Heart right ventricle (tissue), 16 donors: ENCODE measurements at regions of chr1 and their contacts with region 1.

Region 1: DNA sequence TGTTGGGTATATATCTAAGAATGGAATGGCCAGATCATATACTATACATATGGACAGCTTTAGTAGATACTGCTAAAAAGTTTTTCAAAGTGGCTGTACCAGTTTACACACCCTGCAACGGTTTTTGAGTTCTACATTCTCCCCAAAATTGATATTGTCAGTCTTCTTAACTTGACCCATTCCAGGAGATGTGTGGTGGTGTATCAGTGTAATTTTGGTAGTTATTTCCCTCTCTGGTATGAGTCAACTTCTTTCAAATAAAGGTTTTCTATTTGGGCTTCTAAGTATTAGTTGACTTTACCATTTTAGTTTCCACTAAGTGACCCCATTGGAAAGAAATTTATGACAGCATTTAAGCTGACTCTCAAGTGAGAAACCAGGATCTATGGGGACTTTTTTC is 29.2 kb downstream of the INKA2 start:
- DNase-seq: no peak
- ATAC-seq: no peak
- H3K4me3 ChIP-seq: no peak overlapping the region
- H3K27ac ChIP-seq: no peak overlapping the region
- H3K4me1 ChIP-seq: peaks cover 0 to 10% (median 0%) of the 10 kb centered on the region in 9 donors
- H3K27me3 ChIP-seq: no peaks in the 10 kb centered on the region
- CTCF ChIP-seq: no peak

Region 2: DNA sequence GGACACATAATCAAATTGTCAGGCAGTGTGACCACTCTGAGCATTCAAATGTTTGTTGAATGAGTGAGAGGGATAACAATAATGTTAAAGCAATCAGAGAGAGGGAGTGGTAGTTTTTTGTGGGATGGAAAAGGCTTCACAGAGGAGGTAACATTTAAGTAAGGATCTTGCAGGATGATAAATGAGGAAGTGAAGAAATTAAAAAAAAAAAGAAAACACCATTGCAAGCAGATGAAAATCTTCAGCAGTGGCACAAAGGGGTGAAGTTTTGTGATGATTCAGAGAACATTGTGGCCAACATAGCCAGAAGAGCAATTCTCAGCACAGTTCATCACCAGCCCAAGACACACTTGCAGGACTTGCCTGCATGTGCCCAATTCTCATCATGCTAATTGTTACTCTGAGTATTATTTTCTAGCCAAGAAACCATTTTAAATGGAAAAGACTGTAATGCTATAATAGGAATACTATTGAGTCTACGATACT is 317.5 kb before region 1 on chr1:
- intact Hi-C with region 1: no loop called
- DNase-seq: no peak
- ATAC-seq: peak in 1 of 8 donors; percentile 37
- H3K4me3 ChIP-seq: no peak overlapping the region
- H3K27ac ChIP-seq: no peak overlapping the region
- H3K4me1 ChIP-seq: no peaks in the 10 kb centered on the region
- H3K27me3 ChIP-seq: peaks cover 0 to 19% (median 6%) of the 10 kb centered on the region in 7 donors
- CTCF ChIP-seq: no peak

Region 3: DNA sequence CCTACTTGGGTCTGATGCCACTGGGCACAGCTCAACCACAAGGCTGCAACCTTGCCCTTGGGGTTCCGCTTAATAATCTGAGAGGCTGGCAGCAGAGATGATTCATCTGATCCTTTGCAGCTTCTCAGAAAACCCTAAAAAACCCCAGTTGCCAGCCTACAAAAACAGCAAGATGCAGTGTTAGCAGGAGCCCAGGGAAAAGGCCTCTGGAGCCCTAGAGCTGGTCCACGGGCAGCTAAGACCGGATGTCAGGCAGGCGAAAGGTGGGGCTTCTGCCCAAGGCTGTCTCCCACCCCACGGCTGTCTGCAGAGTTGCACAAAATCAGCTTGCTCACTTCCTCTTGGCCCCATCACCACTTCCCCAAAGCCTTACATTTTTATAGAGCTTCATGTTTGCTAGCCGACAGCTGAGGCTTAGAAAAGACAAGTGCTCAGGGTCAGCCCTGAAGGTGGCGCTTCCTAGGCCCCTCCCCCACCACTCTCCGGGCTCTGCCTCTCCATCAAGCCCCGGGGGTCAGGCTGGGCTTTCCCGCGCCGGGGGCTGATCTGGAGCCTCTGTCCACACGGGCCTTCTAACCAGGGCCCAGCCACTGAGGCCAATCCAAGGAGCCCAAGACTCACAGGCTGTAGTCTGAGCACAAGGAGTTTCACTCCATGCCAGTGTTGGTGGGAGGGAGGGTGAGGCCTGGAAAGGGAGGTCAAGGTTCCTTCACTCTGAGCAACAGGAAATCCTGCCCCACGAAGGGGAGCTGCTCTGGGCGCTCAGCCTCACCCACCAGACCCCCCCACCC is 202.4 kb before region 1 on chr1:
- intact Hi-C with region 1: loop called in 1 of 10 experiments (anchors 5 kb)
- DNase-seq: peak; percentile 73 to 79
- ATAC-seq: peak; percentile 59 to 85 (median 75)
- H3K4me3 ChIP-seq: peak overlapping the region in 9 of 10 donors; percentile 6 to 52 (median 31)
- H3K27ac ChIP-seq: peak overlapping the region; percentile 61 to 99 (median 90)
- H3K4me1 ChIP-seq: peaks cover 20 to 95% (median 48%) of the 10 kb centered on the region in 9 donors
- H3K27me3 ChIP-seq: no peaks in the 10 kb centered on the region
- CTCF ChIP-seq: no peak

Region 4: DNA sequence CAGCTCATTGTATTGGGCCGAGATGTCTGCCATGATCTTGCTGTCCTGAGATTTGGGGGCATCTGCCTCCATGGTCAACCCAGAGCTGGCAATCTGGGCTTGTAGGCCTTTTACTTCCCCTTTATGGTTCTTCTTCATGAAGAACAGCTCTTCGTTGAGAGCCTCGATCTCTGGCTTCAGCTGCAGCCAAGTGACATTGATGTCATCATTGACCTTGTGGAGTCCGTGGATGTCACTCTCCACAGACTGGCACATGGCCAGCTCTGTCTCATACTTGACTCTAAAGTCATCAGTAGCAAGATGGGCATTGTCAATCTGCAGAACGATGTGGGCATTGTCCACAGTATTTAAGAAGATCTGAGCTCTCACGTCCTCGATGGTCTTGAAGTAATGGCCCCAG is 61.2 kb before region 1 on chr1:
- intact Hi-C with region 1: no loop called
- DNase-seq: peak; percentile 19 to 31
- ATAC-seq: peak in 3 of 8 donors; percentile 21 to 59 (median 38)
- H3K4me3 ChIP-seq: no peak overlapping the region
- H3K27ac ChIP-seq: peak overlapping the region in 3 of 10 donors; percentile 6 to 19 (median 10)
- H3K4me1 ChIP-seq: peaks cover 4 to 63% (median 31%) of the 10 kb centered on the region in 9 donors
- H3K27me3 ChIP-seq: no peaks in the 10 kb centered on the region
- CTCF ChIP-seq: no peak

Region 5: GRCh38 chr1:111666841-111667270 is 43.1 kb before region 1 on chr1:
- intact Hi-C with region 1: no loop called
- DNase-seq: no peak
- ATAC-seq: peak in 4 of 8 donors; percentile 28 to 55 (median 38)
- H3K4me3 ChIP-seq: no peak overlapping the region
- H3K27ac ChIP-seq: peak overlapping the region in 1 of 10 donors; percentile 11
- H3K4me1 ChIP-seq: peaks cover 6 to 74% (median 54%) of the 10 kb centered on the region in 9 donors
- H3K27me3 ChIP-seq: no peaks in the 10 kb centered on the region
- CTCF ChIP-seq: no peak

Region 6: DNA sequence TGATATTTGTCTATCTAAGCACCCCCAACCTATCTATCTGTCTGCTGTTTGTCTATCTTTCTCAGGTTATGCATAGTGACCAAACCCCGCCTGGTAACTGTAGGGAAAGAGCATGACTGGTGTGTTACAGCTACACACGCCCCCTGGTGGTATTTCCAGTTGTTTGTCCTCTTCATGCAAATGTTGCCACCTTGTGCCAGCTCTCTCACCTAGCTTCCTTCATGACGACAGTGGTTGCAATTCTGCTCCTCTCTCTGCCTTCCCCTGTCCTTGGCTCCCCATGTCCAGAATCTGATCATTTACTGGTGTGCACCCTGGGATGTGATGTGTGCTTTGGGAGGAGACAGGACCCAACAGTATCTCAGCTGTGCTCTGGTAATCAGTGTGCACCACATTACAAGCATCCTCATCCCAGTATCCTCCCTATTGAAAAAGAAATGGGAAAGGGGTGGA is 37.3 kb after region 1 on chr1:
- intact Hi-C with region 1: loop called in 6 of 10 experiments (anchors 2 to 5 kb)
- DNase-seq: peak in 1 of 2 donors; percentile 71
- ATAC-seq: peak in 5 of 8 donors; percentile 16 to 72 (median 55)
- H3K4me3 ChIP-seq: no peak overlapping the region
- H3K27ac ChIP-seq: no peak overlapping the region
- H3K4me1 ChIP-seq: peaks cover 3 to 34% (median 30%) of the 10 kb centered on the region in 9 donors
- H3K27me3 ChIP-seq: peaks cover 0 to 7% (median 0%) of the 10 kb centered on the region in 7 donors
- CTCF ChIP-seq: peak; percentile 42 to 73 (median 62)